ENCODE measurements at regions of chr2 and their contacts with region 1.

Region 1: DNA sequence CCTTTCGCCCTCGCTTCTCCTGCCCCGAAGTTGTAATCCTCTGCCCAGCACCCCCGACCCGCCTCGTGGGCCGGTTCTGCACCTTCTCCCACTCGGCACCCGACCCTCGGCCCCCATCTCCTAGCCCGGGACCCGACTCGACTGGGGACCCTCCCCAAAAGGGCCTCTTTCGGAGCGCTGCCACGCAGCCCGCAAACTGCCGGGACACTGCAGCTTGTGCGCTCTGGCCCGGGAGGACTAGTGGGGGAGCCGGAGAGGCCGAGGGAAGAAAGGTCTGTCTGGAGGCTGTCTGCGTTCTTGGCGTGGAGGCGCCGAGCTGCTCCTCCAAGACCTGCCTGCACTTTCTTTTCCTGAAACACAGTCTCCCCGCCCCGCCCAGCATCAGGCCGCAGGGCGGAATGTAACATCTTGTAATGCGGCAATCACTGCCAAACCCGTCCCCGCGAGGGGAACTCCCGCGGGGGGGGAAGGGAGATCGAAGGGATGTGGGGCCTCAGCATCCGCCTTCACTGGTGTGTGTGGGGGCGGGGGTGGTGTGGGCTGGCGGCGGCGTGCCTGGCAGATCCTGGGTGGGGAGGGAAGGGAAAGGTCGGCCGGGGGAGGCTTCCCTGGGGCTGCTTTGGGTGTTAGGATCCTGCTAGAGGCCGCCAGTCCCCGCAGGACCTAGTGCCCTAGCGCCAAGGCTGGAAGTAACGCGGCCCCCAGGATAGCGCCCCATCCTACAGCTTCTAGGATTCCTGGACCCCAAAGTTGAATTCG is 7.4 kb downstream of the DLX2 start:
- DNase-seq: no peak

Region 2: GRCh38 chr2:171723724-171724683 is 371.3 kb before region 1 on chr2:
- CTCF ChIA-PET with region 1: no interaction called
- POLR2A ChIA-PET with region 1: no interaction called
- DNase-seq: peak; percentile 16

Region 3: GRCh38 chr2:171922230-171923022 is 172.9 kb before region 1 on chr2 and contains the start of gene HAT1:
- CTCF ChIA-PET with region 1: no interaction called
- POLR2A ChIA-PET with region 1: interaction called, 41 read pairs
- DNase-seq: peak; percentile 95

Region 4: DNA sequence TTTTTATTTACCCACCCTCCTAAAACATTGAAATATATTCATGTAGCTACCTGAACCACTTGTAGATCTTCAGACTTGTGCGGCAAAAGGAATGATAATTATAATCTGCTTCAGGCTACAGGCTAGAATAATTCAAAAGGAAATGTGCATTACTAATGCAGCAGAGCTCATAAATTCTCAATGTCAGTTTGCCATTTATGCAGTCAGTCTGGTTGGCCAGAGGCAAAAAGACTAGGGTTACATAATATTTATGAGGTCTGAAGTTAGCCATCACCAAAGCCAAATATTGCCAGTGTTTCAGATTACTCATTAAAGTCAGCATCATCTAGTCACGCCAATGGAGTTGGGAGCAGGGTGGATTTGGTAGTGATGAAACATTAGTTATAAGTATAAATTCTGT is 56.7 kb before region 1 on chr2:
- CTCF ChIA-PET with region 1: no interaction called
- POLR2A ChIA-PET with region 1: interaction called, 33 read pairs
- DNase-seq: peak; percentile 45

Region 5: DNA sequence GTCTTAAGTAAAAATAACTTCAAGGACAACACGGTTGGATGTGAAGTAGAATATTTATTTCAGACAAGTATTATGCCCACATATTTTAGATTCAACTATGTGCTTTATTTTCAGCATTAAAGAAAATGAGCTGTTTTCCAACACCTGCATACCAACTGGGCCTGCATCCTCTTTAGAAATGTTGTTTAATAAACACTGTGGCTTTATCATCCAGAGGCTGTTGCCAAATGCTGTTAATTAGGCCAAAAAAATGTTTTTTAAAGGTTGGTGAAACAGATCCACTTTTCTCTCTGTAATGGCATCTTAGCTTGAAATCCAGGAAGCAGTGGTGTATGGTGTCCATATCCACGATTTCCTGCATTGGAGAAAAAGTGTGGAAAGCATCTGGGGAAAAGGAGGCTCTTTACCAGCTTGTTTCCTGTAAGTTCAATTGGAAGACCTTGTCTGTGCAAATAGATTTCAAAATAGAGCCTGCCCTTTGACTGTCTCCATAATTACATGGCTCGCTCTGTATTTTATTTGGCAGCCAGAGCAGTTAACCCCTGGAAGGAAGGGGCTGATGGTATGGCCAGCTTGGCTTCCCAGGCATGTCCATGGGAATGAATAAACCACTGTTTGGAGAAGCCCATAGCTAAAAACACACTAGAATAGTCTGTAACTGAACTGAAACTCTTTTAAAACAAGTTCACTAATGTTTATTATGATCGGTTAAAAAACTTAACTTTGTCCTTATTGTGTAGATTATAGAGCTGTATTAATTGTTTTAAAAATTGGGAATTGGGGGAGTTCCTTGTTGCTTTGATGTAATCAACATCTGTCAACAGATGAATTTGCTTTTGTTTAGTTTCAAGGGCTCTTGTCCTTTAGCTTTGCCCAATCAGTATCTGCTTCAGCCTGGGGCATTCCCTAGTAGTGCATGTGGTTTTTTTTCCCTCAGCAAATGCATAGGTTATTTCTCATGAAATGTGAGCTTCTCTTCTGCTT is 43.0 kb before region 1 on chr2:
- CTCF ChIA-PET with region 1: interaction called, 3 read pairs
- POLR2A ChIA-PET with region 1: interaction called, 16 read pairs
- DNase-seq: no peak

Region 6: DNA sequence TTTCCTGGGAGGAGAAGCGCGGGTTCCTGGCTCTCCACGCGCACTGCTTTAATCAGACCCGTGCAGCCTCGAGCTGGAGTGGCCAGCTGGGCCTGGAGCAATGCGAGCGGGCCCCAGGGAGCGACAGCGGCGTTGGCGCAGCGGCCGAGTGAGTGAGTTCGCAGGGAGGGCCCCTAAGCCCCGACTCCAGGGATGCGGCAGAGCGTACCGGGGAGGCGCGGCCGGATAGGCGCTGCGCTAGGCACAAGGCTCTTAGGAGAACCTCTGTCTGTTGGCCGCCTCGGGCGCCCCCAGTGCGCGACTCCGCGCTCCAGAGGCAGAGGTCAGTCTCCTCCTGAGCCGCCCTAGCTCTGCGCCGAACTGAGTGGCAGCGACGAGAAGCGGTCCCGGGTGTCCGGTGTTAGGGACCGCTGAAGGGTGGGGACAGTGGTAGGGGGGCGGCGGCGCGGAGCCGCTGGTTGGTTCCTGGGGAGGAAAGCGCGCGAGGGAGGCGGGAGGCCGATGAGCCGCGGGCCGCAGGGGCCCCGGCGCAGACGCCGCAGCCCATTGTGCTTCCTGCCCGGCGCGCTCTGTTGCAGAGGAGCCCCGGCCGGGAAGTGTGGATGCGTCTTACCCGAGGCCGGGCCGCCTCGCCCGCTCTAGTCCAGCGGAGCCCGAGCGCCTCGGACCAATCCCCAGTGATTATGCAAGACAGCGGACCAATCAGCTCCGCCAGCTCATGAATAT is 10.4 kb before region 1 on chr2:
- CTCF ChIA-PET with region 1: interaction called, 7 read pairs
- POLR2A ChIA-PET with region 1: interaction called, 135 read pairs
- DNase-seq: peak; percentile 88

Region 7: GRCh38 chr2:172162225-172162733 is 67.0 kb after region 1 on chr2:
- CTCF ChIA-PET with region 1: no interaction called
- POLR2A ChIA-PET with region 1: no interaction called
- DNase-seq: no peak

Region 8: GRCh38 chr2:172172513-172173173 is 77.3 kb after region 1 on chr2:
- CTCF ChIA-PET with region 1: interaction called, 11 read pairs
- POLR2A ChIA-PET with region 1: no interaction called
- DNase-seq: peak; percentile 87

Measured in HEK293T (cell line).